Activated naive CD4-positive, alpha-beta T cell treated with anti-CD3 and anti-CD28 coated beads for 36 hours (primary cell): ENCODE measurements at regions of chr2 and their contacts with region 1.

Region 1: GRCh38 chr2:232026910-232027309 is 65.4 kb downstream of the DIS3L2 start:
- DNase-seq: peak; percentile 9
- H3K4me3 Mint-ChIP-seq: no peak overlapping the region
- H3K27ac Mint-ChIP-seq: peak overlapping the region; percentile 74
- H3K4me1 Mint-ChIP-seq: peaks cover 30% of the 10 kb centered on the region
- H3K27me3 Mint-ChIP-seq: no peaks in the 10 kb centered on the region

Region 2: DNA sequence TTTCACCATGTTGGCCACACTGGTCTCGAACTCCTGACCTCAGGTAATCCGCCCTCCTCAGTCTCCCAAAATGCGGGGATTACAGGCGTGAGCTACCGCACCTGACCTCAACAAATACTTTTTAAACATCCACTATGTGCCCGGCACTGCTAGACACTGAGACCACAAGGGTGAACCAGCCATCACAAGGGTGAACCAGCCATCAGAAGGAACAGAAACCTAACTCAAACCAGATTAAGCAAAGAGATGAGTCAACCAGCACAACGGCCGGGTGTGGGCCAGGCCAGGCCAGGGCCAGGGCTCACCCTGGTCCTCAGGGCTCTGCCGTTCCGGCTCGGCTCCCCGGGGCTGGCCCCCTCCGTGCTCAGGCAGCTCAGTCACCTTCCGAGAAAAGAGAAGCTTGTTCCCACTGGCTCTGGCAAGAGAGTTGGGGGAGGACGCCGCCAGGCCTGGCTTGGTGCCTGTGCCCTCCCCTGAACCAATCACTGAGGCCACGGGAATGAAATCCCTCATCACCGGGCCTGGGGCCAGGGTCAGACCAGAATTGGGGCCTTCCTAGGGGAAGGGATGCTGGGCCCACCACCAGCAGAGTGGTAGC is 429.8 kb before region 1 on chr2:
- CTCF ChIA-PET with region 1: no interaction called
- intact Hi-C with region 1: no loop called
- DNase-seq: no peak
- H3K4me3 Mint-ChIP-seq: no peak overlapping the region
- H3K27ac Mint-ChIP-seq: no peak overlapping the region
- H3K4me1 Mint-ChIP-seq: peaks cover 2% of the 10 kb centered on the region
- H3K27me3 Mint-ChIP-seq: no peaks in the 10 kb centered on the region

Region 3: DNA sequence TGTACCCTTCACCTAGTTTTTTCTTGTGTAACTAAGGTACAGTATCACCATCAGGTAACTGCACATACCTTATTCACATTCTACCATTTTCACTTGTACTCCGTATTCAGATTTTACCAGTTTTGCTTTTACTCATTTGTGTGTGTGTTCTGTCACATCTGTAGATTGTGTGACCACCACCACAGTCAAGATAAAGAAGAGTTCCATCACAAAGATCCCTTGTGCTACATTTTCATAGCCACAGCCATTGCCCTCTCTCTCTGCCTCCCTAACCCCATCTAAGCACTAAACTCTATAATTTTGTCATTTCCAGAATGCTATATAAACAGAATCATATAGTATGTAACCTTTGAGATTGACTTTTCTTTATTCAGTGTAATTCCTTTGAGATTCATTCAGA is 41.9 kb before region 1 on chr2:
- CTCF ChIA-PET with region 1: no interaction called
- intact Hi-C with region 1: loop called (anchors 1 kb)
- DNase-seq: no peak
- H3K4me3 Mint-ChIP-seq: no peak overlapping the region
- H3K27ac Mint-ChIP-seq: no peak overlapping the region
- H3K4me1 Mint-ChIP-seq: peaks cover 34% of the 10 kb centered on the region
- H3K27me3 Mint-ChIP-seq: no peaks in the 10 kb centered on the region

Region 4: GRCh38 chr2:232058063-232058877 is 31.4 kb after region 1 on chr2:
- CTCF ChIA-PET with region 1: interaction called, 5 read pairs
- intact Hi-C with region 1: loop called (anchors 1 kb)
- DNase-seq: peak; percentile 10
- H3K4me3 Mint-ChIP-seq: no peak overlapping the region
- H3K27ac Mint-ChIP-seq: no peak overlapping the region
- H3K4me1 Mint-ChIP-seq: peaks cover 41% of the 10 kb centered on the region
- H3K27me3 Mint-ChIP-seq: no peaks in the 10 kb centered on the region

Region 5: DNA sequence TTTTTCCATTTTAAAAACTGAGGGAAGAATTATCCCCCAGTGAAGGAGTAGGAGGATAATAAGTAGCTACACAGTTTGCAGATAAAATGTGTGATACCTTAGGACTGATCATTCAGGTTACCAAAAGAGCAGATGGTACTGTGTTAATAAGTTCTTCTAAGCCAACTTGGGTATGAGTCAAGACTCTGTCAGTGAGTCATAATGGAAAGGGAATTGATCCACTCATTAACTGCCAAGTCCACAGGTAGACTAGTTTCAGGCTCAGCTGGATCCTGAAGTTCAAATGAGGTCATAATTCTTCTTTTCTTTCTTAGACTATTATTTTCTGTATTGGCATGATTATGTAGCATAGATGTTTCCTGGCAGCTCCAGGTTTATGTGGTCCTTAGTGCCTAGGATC is 209.3 kb after region 1 on chr2:
- CTCF ChIA-PET with region 1: no interaction called
- intact Hi-C with region 1: loop called (anchors 1 kb)
- DNase-seq: no peak
- H3K4me3 Mint-ChIP-seq: no peak overlapping the region
- H3K27ac Mint-ChIP-seq: no peak overlapping the region
- H3K4me1 Mint-ChIP-seq: peaks cover 74% of the 10 kb centered on the region
- H3K27me3 Mint-ChIP-seq: no peaks in the 10 kb centered on the region

Region 6: GRCh38 chr2:232250246-232251175 is 223.6 kb after region 1 on chr2:
- CTCF ChIA-PET with region 1: no interaction called
- intact Hi-C with region 1: no loop called
- DNase-seq: no peak
- H3K4me3 Mint-ChIP-seq: no peak overlapping the region
- H3K27ac Mint-ChIP-seq: no peak overlapping the region
- H3K4me1 Mint-ChIP-seq: no peaks in the 10 kb centered on the region
- H3K27me3 Mint-ChIP-seq: no peaks in the 10 kb centered on the region